H1 (cell line): ENCODE measurements at regions of chr3 and their contacts with region 1.

Region 1: GRCh38 chr3:27721717-27722542 is at the start of gene EOMES:
- DNase-seq: peak in 1 of 2 experiments; percentile 84
- H3K4me3 ChIP-seq: peak within 1 kb of the TSS; percentile 23 to 64 (median 50)
- H3K27ac ChIP-seq: no peak within 1 kb of the TSS
- H3K4me1 ChIP-seq: peaks cover 10 to 36% (median 16%) of the 10 kb centered on the region in 4 experiments
- H3K27me3 ChIP-seq: peaks cover 74 to 100% (median 89%) of the 10 kb centered on the region in 4 experiments
- CTCF ChIP-seq: peak; percentile 25 to 63 (median 32)
- EP300 ChIP-seq: peak in 1 of 2 experiments; percentile 78; a peak in 1 of 3 replicates
- POLR2A ChIP-seq: 0 out of 3 replicates have a peak, but pooled peaks of 1 of the 2 experiments have one; percentile 4
- RAD21 ChIP-seq: peak; percentile 45 to 64
- total RNA-seq, gene EOMES: 0.47 and 0.50 TPM in 2 replicates

Region 2: GRCh38 chr3:27737091-27737490 is 15.2 kb after region 1 on chr3:
- CTCF ChIA-PET with region 1: interaction called, 23 read pairs
- POLR2A ChIA-PET with region 1: interaction called, 9 read pairs
- DNase-seq: no peak
- H3K4me3 ChIP-seq: no peak overlapping the region
- H3K27ac ChIP-seq: no peak overlapping the region
- H3K4me1 ChIP-seq: peaks cover 0 to under 1% (median 0%) of the 10 kb centered on the region in 4 experiments; a peak in 1 of 7 replicates
- H3K27me3 ChIP-seq: peaks cover 8 to 17% (median 16%) of the 10 kb centered on the region in 4 experiments
- CTCF ChIP-seq: no peak
- EP300 ChIP-seq: no peak
- POLR2A ChIP-seq: no peak
- RAD21 ChIP-seq: no peak

Region 3: GRCh38 chr3:27827041-27827440 is 105.1 kb after region 1 on chr3:
- CTCF ChIA-PET with region 1: interaction called, 14 read pairs
- POLR2A ChIA-PET with region 1: no interaction called
- DNase-seq: no peak
- H3K4me3 ChIP-seq: no peak overlapping the region
- H3K27ac ChIP-seq: no peak overlapping the region
- H3K4me1 ChIP-seq: peaks cover 0 to 3% (median 0%) of the 10 kb centered on the region in 4 experiments; a peak in 1 of 7 replicates
- H3K27me3 ChIP-seq: peaks cover 0 to 2% (median 0%) of the 10 kb centered on the region in 4 experiments; a peak in 2 of 7 replicates
- CTCF ChIP-seq: peak in 2 of 3 experiments; percentile 11 to 44; a peak in 2 of 4 replicates
- EP300 ChIP-seq: no peak
- POLR2A ChIP-seq: no peak
- RAD21 ChIP-seq: peak; percentile 43 to 54